ENCODE measurements at regions of chrX and their contacts with region 1.

Region 1: GRCh38 chrX:154775419-154776349 is 13.0 kb downstream of the DKC1 start:
- DNase-seq: peak; percentile 45
- ATAC-seq: peak; percentile 40
- H3K4me3 ChIP-seq: no peak overlapping the region
- H3K27ac ChIP-seq: no peak overlapping the region
- H3K4me1 ChIP-seq: peaks cover 3% of the 10 kb centered on the region; the same call in 1 of the 2 replicates
- H3K27me3 ChIP-seq: no peaks in the 10 kb centered on the region
- CTCF ChIP-seq: no peak
- POLR2A ChIP-seq: no peak
- RAD21 ChIP-seq: no peak

Region 2: GRCh38 chrX:154785716-154786115 is 10.0 kb after region 1 on chrX:
- CTCF ChIA-PET with region 1: no interaction called
- POLR2A ChIA-PET with region 1: interaction called, 15 read pairs
- dilution Hi-C with region 1: no loop called
- in situ Hi-C with region 1: no loop called
- intact Hi-C with region 1: no loop called
- DNase-seq: no peak
- ATAC-seq: no peak
- H3K4me3 ChIP-seq: no peak overlapping the region
- H3K27ac ChIP-seq: no peak overlapping the region
- H3K4me1 ChIP-seq: peaks cover 2% of the 10 kb centered on the region; the same call in 1 of the 2 replicates
- H3K27me3 ChIP-seq: no peaks in the 10 kb centered on the region
- CTCF ChIP-seq: no peak
- POLR2A ChIP-seq: no peak
- RAD21 ChIP-seq: no peak

Region 3: GRCh38 chrX:154809939-154810665 is 34.4 kb after region 1 on chrX:
- CTCF ChIA-PET with region 1: no interaction called
- POLR2A ChIA-PET with region 1: no interaction called
- dilution Hi-C with region 1: no loop called
- in situ Hi-C with region 1: no loop called
- intact Hi-C with region 1: loop called (anchors 1 kb)
- DNase-seq: peak; percentile 17
- ATAC-seq: 0 out of 2 replicates have a peak, but pooled peaks have one; percentile 8
- H3K4me3 ChIP-seq: no peak overlapping the region
- H3K27ac ChIP-seq: no peak overlapping the region
- H3K4me1 ChIP-seq: no peaks in the 10 kb centered on the region
- H3K27me3 ChIP-seq: no peaks in the 10 kb centered on the region
- CTCF ChIP-seq: no peak
- POLR2A ChIP-seq: no peak
- RAD21 ChIP-seq: no peak

Region 4: GRCh38 chrX:154840856-154841255 is 65.2 kb after region 1 on chrX:
- CTCF ChIA-PET with region 1: no interaction called
- POLR2A ChIA-PET with region 1: no interaction called
- dilution Hi-C with region 1: no loop called
- in situ Hi-C with region 1: no loop called
- intact Hi-C with region 1: loop called (anchors 2 kb)
- DNase-seq: peak; percentile 70
- ATAC-seq: peak; percentile 74
- H3K4me3 ChIP-seq: no peak overlapping the region
- H3K27ac ChIP-seq: no peak overlapping the region
- H3K4me1 ChIP-seq: no peaks in the 10 kb centered on the region
- H3K27me3 ChIP-seq: no peaks in the 10 kb centered on the region
- CTCF ChIP-seq: peak; percentile 75
- POLR2A ChIP-seq: no peak
- RAD21 ChIP-seq: peak; percentile 84

Region 5: GRCh38 chrX:154967603-154968002 is 191.9 kb after region 1 on chrX:
- CTCF ChIA-PET with region 1: no interaction called
- POLR2A ChIA-PET with region 1: no interaction called
- dilution Hi-C with region 1: no loop called
- in situ Hi-C with region 1: no loop called
- intact Hi-C with region 1: no loop called
- DNase-seq: peak; percentile 5
- ATAC-seq: no peak
- H3K4me3 ChIP-seq: no peak overlapping the region
- H3K27ac ChIP-seq: no peak overlapping the region
- H3K4me1 ChIP-seq: no peaks in the 10 kb centered on the region
- H3K27me3 ChIP-seq: no peaks in the 10 kb centered on the region
- CTCF ChIP-seq: no peak
- POLR2A ChIP-seq: no peak
- RAD21 ChIP-seq: no peak